Right cardiac atrium (tissue), 5 donors: ENCODE measurements at regions of chr11 and their contacts with region 1.

Region 1: DNA sequence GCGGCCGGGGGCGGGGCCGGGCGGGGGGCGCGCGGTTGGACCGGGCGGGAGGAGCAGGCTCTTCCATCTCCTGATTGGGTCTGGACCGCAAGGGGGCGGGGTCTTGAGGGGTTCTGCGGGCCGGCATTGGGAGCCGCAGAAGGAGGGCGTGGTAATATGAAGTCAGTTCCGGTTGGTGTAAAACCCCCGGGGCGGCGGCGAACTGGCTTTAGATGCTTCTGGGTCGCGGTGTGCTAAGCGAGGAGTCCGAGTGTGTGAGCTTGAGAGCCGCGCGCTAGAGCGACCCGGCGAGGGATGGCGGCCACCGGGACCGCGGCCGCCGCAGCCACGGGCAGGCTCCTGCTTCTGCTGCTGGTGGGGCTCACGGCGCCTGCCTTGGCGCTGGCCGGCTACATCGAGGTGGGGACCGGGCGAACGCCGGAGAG is at the start of gene APLP2:
- DNase-seq: peak; percentile 100
- ATAC-seq: peak; percentile 96 to 97
- H3K4me3 ChIP-seq: peak within 1 kb of the TSS; percentile 88
- H3K27ac ChIP-seq: peak within 1 kb of the TSS; percentile 100
- H3K4me1 ChIP-seq: no peaks in the 10 kb centered on the region
- H3K27me3 ChIP-seq: no peaks in the 10 kb centered on the region
- total RNA-seq, gene APLP2: 311 to 375 (median 344) TPM

Region 2: DNA sequence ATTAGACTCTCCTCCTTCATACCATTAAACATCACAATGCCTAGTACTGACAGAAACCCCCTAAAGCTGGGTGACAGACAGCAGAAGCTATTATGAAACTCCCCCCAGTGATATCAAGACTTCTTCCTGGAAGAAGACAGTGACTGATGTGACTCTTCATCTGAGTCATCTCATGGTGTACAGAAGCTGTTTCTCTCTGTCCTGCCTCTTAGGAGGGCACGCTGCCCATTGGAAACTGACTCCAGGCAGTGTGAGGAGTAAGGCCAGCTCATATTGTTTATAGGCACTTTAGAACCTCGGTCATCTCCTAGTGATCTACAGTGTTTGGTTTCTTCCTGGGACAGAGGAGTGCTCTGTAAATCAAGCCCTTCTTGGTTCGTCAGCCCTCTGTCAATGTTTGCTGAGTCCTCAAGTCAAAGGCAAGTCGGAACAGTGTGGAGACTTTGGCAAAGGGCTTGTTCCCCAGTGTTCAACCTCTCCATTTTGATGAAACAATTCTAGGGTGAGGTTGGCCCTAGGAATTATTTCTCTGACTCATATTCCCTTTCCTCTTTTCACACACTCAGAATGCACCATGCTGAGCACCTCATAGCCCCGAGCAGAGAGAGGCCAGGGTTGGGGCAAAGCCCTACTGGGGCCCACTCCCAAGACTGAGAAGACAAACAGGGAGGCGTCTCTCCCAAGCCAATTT is 426.5 kb before region 1 on chr11:
- intact Hi-C with region 1: no loop called
- DNase-seq: no peak
- ATAC-seq: no peak
- H3K4me3 ChIP-seq: no peak overlapping the region
- H3K27ac ChIP-seq: no peak overlapping the region
- H3K4me1 ChIP-seq: no peaks in the 10 kb centered on the region
- H3K27me3 ChIP-seq: no peaks in the 10 kb centered on the region

Region 3: DNA sequence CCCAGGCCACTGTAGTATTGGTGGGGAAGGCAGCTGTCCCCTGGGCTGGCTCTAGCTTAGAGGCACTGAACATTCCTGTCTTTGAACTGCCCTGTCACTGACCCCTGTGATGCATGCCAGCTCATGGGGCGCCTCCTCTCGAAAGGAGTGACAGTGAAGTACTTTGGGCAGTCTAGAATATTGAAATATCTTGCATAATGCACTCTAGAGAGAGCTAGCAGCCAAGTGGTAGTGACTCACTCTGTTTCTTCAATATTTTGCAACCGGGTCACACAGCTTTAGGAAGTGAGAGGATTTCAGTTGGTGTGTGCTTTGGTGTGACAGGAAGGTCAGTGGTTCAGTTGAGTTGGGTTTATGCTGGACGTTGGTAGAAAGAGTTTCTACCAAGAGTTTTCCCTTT is 54.4 kb after region 1 on chr11:
- intact Hi-C with region 1: loop called in 1 of 4 experiments (anchors 10 kb)
- DNase-seq: peak; percentile 85 to 89 (median 87)
- ATAC-seq: peak; percentile 95 to 96
- H3K4me3 ChIP-seq: no peak overlapping the region
- H3K27ac ChIP-seq: peak overlapping the region; percentile 52
- H3K4me1 ChIP-seq: peaks cover 5% of the 10 kb centered on the region
- H3K27me3 ChIP-seq: no peaks in the 10 kb centered on the region